ENCODE measurements at regions of chr1 and their contacts with region 1.

Region 1: GRCh38 chr1:12619792-12620487 is 1.9 kb upstream of the DHRS3 start:
- DNase-seq: peak; percentile 97
- H3K4me3 ChIP-seq: peak overlapping the region; percentile 70 to 92 (median 78)
- H3K27ac ChIP-seq: peak overlapping the region; percentile 90 to 99 (median 96)
- H3K4me1 ChIP-seq: peaks cover 0 to 68% (median 60%) of the 10 kb centered on the region in 4 donors
- H3K27me3 ChIP-seq: no peaks in the 10 kb centered on the region
- CTCF ChIP-seq: peak; percentile 96 to 99 (median 98)
- EP300 ChIP-seq: peak in 1 of 4 donors; percentile 16
- POLR2A ChIP-seq: peak in 1 of 2 donors; percentile 17

Region 2: DNA sequence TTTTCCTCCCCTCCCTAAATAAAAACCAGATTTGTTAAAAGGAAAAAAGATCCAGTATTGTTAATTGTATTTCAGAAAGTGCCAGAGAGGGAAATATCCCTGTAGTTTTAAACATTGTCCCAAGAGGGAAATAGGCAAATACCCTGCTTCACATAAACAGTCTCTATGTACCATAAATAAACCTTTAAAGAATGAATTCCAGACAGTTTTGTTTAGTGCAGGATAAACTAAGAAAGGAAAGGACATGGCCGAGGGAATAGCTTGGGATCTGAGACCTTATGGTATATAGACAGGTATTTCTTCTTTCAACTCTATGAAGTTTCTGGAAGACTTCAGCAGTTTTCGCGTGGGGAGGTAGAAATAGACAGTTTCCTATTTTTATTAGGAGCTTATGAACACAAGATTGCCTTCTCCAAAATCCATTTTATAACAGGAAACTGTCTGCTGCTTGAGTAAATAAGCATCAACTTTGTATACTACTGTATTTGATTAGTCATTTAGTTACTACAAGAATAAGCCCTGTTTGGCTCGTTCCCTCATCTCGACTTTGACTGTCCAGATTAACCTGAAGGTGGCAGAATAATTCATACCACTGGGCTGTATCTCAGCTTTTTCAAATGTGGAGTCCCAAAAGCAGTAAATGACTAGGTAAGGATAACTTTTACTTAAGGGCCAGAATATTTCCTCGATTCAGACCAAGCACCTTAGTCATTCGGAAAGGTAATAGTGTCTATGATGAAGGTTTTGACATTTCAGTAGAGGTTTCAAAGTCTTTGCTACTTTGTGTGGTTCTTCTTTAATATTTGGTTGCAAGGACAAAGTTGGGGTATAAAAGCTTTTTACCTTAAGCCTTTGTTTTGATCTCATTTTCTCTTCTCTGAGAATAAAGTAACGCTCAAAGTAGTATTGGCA is 212.6 kb before region 1 on chr1:
- intact Hi-C with region 1: loop called (anchors 1 kb)
- DNase-seq: no peak
- H3K4me3 ChIP-seq: no peak overlapping the region
- H3K27ac ChIP-seq: peak overlapping the region; percentile 75 to 82 (median 80)
- H3K4me1 ChIP-seq: peaks cover 0 to 51% (median 49%) of the 10 kb centered on the region in 4 donors
- H3K27me3 ChIP-seq: no peaks in the 10 kb centered on the region
- CTCF ChIP-seq: peak in 3 of 4 experiments; percentile 26 to 33 (median 27)
- EP300 ChIP-seq: no peak
- POLR2A ChIP-seq: no peak

Region 3: GRCh38 chr1:12464598-12465056 is 155.3 kb before region 1 on chr1:
- intact Hi-C with region 1: loop called (anchors 5 kb)
- DNase-seq: peak; percentile 89
- H3K4me3 ChIP-seq: no peak overlapping the region
- H3K27ac ChIP-seq: peak overlapping the region; percentile 73 to 89 (median 86)
- H3K4me1 ChIP-seq: peaks cover 0 to 68% (median 66%) of the 10 kb centered on the region in 4 donors
- H3K27me3 ChIP-seq: no peaks in the 10 kb centered on the region
- CTCF ChIP-seq: no peak
- EP300 ChIP-seq: peak in 1 of 4 donors; percentile 65
- POLR2A ChIP-seq: no peak

Region 4: DNA sequence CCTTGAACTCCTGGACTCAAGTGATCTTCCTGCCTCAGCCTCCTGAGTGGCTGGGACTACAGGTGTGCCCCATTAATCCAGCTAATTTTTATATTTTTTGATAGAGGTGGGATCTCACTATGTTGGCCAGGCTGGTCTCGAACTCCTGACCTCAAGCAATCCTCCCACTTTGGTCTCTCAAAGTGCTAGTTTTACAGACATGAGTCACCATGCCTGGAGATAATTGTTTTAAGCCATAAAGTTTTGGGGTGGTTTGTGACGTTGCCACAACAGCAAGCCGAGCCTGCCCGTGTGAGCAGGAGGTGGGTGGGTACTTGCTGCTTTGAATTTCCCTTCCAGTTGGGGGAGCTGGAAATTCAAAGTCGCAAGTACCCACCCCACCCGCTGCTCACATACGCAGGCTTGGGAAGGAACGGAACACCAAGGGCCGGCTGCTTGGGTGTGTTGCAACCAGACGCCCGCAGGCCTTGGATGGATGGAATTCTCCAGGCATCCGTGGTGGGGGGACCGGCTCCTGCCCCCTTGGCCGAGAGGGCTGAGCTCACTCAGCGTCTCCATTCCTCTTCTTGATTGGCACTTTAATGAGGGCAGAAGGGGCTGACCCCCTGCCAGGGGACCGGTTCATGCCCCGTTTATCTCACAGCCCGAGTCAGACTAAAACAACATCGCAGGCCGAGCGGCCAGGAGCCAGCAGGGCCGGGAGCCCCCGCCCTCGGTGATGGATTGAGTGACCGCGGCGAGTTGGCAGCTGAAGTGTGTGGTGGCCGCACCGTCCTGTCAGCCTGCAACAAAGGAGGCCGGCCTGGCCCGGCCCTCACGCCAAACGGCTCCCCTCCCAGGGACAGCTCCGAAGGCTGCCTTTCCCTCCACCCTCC is 80.0 kb before region 1 on chr1:
- intact Hi-C with region 1: loop called (anchors 2 kb)
- DNase-seq: peak; percentile 97
- H3K4me3 ChIP-seq: peak overlapping the region in 2 of 4 donors; percentile 16 to 23
- H3K27ac ChIP-seq: peak overlapping the region; percentile 77 to 89 (median 87)
- H3K4me1 ChIP-seq: peaks cover 0 to 35% (median 28%) of the 10 kb centered on the region in 4 donors
- H3K27me3 ChIP-seq: no peaks in the 10 kb centered on the region
- CTCF ChIP-seq: no peak
- EP300 ChIP-seq: peak; percentile 55 to 92 (median 74)
- POLR2A ChIP-seq: no peak

Region 5: DNA sequence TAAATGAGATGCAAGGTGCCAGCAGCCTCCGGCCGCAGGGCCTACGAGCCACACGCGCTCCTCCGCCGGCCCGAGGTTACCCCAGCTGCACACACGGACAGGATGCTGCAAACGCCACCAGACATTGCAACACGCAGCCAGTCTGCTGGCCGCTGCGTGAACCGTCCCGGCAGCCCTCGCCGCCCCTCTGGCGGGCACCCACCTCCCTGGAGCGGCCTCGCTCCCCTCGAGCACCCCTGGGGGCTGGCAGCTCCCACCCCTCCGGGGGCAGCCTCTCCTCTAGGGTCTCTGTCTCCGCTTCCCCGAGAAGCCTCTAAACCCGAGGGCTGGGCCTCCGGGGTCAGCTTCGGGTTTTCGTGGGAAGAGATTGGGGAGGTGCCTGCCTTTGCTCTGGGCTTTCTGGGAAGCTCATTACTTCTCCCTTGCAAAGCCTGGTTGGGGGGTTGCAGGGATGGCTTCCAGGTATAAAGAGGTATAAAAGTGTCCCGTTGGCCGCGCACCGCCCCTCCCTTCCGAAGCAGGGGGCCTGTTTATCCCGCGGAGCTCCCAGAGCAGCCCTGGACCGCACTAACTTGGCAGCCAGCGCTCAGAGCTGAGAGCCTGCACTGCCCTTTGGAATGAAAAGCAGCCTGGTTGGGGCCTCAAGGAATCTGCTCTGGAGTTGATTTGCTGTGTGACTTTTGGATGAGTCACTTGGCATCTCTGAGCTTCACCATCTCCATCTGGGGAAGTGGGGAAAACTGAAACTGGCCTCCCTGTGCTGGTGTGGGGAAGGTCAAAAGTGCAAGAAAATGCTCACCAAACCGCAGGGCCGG is 23.7 kb before region 1 on chr1:
- intact Hi-C with region 1: loop called (anchors 1 kb)
- DNase-seq: peak; percentile 97
- H3K4me3 ChIP-seq: peak overlapping the region; percentile 10 to 47 (median 42)
- H3K27ac ChIP-seq: peak overlapping the region; percentile 90 to 99 (median 94)
- H3K4me1 ChIP-seq: peaks cover 0 to 100% (median 98%) of the 10 kb centered on the region in 4 donors
- H3K27me3 ChIP-seq: no peaks in the 10 kb centered on the region
- CTCF ChIP-seq: no peak
- EP300 ChIP-seq: peak in 2 of 4 donors; percentile 80 to 88
- POLR2A ChIP-seq: peak in 1 of 2 donors; percentile 7

Measured in sigmoid colon (tissue), 7 donors.